ENCODE measurements at regions of chr17 and their contacts with region 1.

Region 1: GRCh38 chr17:60327122-60327900 is 64.6 kb downstream of the USP32 start:
- DNase-seq: no peak
- H3K4me3 ChIP-seq: no peak overlapping the region
- H3K27ac ChIP-seq: no peak overlapping the region
- H3K4me1 ChIP-seq: no peaks in the 10 kb centered on the region
- H3K27me3 ChIP-seq: no peaks in the 10 kb centered on the region
- CTCF ChIP-seq: no peak
- POLR2A ChIP-seq: no peak

Region 2: GRCh38 chr17:60293580-60294335 is 33.6 kb before region 1 on chr17:
- intact Hi-C with region 1: no loop called
- DNase-seq: no peak
- H3K4me3 ChIP-seq: no peak overlapping the region
- H3K27ac ChIP-seq: no peak overlapping the region
- H3K4me1 ChIP-seq: no peaks in the 10 kb centered on the region
- H3K27me3 ChIP-seq: no peaks in the 10 kb centered on the region
- CTCF ChIP-seq: no peak
- POLR2A ChIP-seq: no peak

Region 3: GRCh38 chr17:60345227-60345626 is 17.9 kb after region 1 on chr17:
- intact Hi-C with region 1: loop called (anchors 2 kb)
- DNase-seq: no peak
- H3K4me3 ChIP-seq: no peak overlapping the region
- H3K27ac ChIP-seq: no peak overlapping the region
- H3K4me1 ChIP-seq: no peaks in the 10 kb centered on the region
- H3K27me3 ChIP-seq: no peaks in the 10 kb centered on the region
- CTCF ChIP-seq: no peak
- POLR2A ChIP-seq: no peak